GM23248 (cell line): ENCODE measurements at regions of chr9 and their contacts with region 1.

Region 1: DNA sequence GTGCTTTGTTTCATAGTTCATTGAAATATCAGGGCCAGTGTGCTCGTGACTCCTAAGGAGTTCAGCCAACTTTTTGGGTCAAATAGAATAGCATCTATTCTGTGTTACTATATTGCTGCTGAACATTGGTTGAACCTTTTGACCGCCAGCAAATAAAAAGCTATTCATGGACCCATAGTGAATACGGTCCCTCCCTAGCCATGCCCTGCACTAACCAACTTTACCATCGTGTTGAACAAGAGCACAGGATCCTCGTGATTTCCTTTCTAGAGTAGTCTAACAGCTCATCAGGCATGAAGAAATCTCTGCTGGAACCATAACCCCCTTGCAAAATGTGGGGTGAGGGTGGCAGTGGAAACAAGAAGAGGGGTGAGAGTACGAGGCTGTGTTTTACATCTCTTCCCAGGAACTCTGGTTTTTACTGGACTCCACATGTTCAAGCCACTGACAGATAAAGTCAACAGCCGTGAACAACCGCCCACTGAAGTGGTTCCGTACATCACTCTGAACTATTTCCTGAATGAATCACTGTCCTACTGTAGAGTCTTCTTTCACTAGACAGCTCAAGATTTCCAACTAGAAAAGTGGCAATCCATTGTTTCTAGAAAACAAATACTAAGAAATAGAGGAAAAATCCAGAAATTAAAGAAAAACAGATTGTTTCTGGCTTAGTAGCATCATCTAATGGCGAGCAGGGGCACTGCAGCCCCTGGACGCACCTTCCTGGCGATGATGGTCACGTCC is 70.1 kb upstream of the SPATA31E1 start:
- DNase-seq: peak; percentile 88
- H3K4me3 ChIP-seq: peak overlapping the region; percentile 26; the same call in 1 of the 2 replicates
- H3K27ac ChIP-seq: peak overlapping the region; percentile 29
- H3K4me1 ChIP-seq: peaks cover 13% of the 10 kb centered on the region
- H3K27me3 ChIP-seq: no peaks in the 10 kb centered on the region

Region 2: DNA sequence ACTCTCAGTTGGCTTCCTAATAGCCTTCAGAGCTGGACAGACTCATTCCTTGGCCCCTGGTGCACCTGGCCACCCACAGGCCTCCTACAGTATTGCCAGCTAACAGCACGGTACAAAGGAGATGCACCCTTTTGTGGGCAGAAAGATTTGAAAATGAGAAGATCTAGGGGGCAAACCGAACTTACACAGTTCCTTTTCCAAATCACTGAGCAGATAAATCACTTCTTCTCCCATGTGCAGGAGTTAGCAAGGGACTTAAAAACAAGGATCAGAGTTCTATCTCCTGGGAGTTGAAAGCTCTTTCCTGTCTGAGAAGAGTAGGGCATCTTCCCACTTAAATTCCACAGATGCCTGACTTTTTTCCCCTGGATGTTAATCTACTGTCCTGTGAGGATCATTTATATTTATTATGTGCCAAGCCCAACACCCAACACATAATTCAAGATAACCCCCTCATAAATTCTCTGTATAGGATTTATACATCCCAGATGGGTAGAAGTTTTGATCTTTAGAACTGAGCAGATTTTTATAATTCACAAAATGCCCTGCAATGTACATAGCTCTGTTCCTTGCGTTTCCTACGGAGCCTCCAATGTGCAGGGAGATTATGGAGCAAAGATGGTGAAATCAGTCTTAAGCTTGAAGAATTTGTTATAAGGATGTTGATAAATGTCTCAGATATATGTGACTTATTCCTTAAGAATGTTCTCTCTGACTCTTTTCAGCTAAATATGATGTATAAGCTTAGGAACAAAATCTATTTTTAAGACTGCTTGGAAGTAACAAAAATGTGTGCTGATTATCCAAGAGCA is 522.1 kb before region 1 on chr9:
- in situ Hi-C with region 1: no loop called
- DNase-seq: peak; percentile 71
- H3K4me3 ChIP-seq: peak overlapping the region; percentile 17
- H3K27ac ChIP-seq: peak overlapping the region; percentile 63
- H3K4me1 ChIP-seq: peaks cover 24% of the 10 kb centered on the region
- H3K27me3 ChIP-seq: no peaks in the 10 kb centered on the region

Region 3: GRCh38 chr9:87336914-87337333 is 475.6 kb before region 1 on chr9:
- in situ Hi-C with region 1: loop called (anchors 25 kb)
- DNase-seq: peak; percentile 92
- H3K4me3 ChIP-seq: peak overlapping the region; percentile 68
- H3K27ac ChIP-seq: no peak overlapping the region
- H3K4me1 ChIP-seq: peaks cover 9% of the 10 kb centered on the region
- H3K27me3 ChIP-seq: peaks cover 3% of the 10 kb centered on the region

Region 4: DNA sequence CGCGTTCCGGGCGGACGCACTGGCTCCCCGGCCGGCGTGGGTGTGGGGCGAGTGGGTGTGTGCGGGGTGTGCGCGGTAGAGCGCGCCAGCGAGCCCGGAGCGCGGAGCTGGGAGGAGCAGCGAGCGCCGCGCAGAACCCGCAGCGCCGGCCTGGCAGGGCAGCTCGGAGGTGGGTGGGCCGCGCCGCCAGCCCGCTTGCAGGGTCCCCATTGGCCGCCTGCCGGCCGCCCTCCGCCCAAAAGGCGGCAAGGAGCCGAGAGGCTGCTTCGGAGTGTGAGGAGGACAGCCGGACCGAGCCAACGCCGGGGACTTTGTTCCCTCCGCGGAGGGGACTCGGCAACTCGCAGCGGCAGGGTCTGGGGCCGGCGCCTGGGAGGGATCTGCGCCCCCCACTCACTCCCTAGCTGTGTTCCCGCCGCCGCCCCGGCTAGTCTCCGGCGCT is 314.9 kb before region 1 on chr9 and contains the start of gene DAPK1:
- in situ Hi-C with region 1: no loop called
- DNase-seq: peak; percentile 40
- H3K4me3 ChIP-seq: peak within 1 kb of the TSS; percentile 60
- H3K27ac ChIP-seq: no peak within 1 kb of the TSS
- H3K4me1 ChIP-seq: no peaks in the 10 kb centered on the region
- H3K27me3 ChIP-seq: peaks cover 51% of the 10 kb centered on the region
- total RNA-seq, gene DAPK1: 1.9 and 3.3 TPM in 2 replicates